ENCODE measurements at regions of chr4 and their contacts with region 1.

Region 1: DNA sequence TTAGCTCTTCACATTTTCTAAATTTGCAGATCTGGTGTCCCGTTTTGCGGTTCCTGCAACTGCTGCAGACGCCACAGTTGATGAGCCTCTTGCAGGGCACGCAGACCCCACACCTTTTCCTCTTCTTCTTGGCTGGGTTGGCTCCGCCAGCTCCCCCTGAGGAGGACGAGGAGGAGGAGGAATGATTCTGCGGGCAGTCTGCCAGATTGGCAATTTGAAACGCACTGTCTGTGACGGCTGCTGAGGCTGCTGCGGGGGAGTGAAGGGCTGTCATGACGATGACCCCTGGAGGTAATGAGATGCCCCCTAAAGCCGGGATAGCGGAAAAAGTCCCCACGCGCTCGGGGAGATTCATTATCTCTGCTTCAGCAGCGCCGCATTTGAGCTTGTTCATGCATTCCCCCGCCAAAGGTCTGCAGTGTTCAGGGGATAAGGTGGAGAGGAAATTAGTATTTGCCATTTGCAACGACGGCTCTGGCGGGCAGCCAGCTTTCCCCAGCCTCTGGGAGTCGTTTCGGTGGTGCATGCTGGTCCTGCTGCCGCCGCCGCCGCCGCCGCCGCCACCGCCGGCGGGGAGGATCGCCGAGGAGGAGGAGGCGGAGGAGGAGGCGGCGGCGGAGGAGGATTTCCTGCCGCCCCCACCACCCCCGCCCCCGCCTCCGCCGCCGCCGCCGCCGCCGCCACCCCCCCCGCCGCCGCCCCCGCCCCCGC is 3.8 kb downstream of the CXXC4 start:
- DNase-seq: peak; percentile 80

Region 2: GRCh38 chr4:104429150-104429741 is 61.7 kb before region 1 on chr4:
- intact Hi-C with region 1: no loop called
- DNase-seq: no peak

Region 3: DNA sequence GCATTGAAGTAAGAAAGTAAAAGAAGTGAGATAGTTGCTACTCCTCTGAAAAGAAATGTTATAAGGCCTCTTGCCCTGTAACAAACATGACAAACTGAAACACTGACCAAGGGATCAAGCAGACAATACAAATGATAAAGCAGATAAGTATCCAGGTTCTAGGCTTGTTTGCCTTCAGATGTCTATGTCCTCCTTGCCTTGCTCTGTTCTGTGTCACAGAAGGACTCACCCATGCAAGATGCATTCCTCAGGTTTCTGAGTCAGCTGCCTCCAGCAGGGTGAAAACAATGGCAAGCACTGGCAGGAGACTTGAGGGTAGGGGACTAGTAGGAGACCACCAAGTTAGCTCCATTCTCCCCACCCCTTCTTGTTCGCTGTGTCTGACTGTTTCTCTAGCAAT is 80.4 kb after region 1 on chr4:
- intact Hi-C with region 1: no loop called
- DNase-seq: no peak

Region 4: DNA sequence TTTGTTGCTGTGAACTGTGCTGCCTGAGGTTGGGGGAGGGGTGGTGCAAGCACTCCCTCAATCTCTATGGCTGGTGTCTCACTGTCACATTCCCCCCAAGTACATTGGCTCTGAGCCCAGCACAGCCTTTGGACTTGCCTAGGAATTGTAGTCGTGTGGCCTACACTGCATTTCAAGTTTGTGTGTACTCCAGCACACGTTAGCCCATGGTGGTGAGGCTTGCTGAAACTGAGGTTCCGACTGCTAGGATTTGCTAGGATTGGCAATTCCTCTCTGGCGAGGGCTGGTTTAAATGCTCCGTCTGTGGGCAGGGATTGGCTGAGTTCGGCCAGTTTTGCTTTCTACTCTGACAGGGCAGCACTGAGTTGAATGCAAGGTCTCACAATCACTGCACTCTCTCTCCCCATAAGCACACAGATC is 125.5 kb after region 1 on chr4:
- intact Hi-C with region 1: loop called (anchors 10 kb)
- DNase-seq: peak; percentile 77

Region 5: DNA sequence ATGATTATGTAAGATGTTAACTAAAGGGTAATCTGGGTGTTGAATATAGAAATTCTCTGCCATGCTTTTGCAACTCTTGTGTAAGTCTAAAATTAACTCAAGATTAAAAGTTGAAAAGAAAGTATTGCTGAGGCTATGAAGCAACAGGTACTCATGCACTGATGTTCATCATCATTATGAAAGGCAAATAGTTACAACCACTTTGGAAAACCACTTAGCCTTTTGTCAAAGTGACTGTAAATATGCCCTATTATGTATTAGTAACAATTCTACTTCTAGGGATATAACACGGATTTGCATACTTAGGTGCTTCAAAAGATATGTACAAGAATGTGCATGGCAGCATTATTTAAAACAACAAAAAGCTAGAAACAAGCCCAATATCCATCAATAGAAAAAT is 231.5 kb after region 1 on chr4:
- intact Hi-C with region 1: no loop called
- DNase-seq: no peak

Region 6: DNA sequence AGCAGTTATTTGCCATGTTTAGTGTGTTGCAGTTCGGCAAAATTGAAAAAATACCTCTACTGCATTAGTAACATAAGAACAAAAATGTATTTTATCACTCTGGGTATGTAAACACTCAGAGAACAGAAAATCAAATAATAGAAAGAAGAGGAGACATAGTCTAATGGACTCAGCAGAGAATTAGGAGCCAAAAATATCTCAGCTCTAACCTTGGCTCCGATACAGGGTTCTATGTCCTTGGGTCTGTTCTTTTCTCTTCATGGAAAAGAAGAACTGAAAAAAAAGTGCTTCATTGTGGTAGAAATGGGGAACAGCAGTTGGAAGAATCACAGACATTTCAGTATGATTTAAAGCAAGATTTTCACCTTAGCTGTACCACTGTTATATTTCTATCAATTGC is 244.2 kb after region 1 on chr4:
- intact Hi-C with region 1: loop called (anchors 10 kb)
- DNase-seq: no peak

Region 7: GRCh38 chr4:104815665-104816064 is 324.7 kb after region 1 on chr4:
- intact Hi-C with region 1: no loop called
- DNase-seq: no peak

Region 8: GRCh38 chr4:105708530-105709391 is 1217.8 kb after region 1 on chr4 and contains the starts of genes GSTCD and INTS12:
- intact Hi-C with region 1: loop called (anchors 10 kb)
- DNase-seq: peak; percentile 95
- total RNA-seq, gene GSTCD: 4.8 TPM
- total RNA-seq, gene INTS12: 19.3 TPM

Measured in cardiac septum (tissue), 1 donor.